ENCODE measurements at regions of chr1 and their contacts with region 1.

Region 1: DNA sequence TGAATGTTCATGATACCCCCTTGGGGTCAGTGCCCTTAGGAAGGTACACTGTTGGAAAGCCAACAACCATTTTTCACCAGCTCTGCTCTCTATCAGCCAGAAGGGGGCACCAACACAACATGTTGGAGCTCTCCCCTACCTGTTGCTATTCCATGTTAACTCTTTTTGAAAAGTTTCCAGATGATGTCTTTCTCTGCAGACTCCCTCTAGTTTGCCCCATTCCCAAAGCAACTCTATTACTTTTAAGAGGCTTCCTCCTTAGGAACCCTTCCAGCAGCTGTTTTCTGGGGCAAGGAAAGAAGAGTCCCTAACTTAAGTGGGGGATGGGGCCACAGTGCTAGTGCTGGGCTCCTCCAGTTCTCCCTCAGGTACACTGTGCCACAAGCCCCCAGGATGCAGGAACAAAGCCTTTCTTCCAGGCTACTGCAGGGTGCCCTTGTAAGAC is 22.9 kb upstream of the NDC1 start:
- DNase-seq: peak; percentile 75
- H3K4me3 ChIP-seq: no peak overlapping the region
- H3K27ac ChIP-seq: no peak overlapping the region
- H3K4me1 ChIP-seq: peaks cover 14% of the 10 kb centered on the region
- CTCF ChIP-seq: peak; percentile 95

Region 2: GRCh38 chr1:53792806-53793205 is 68.2 kb before region 1 on chr1:
- CTCF ChIA-PET with region 1: no interaction called
- POLR2A ChIA-PET with region 1: no interaction called
- intact Hi-C with region 1: no loop called
- DNase-seq: no peak
- H3K4me3 ChIP-seq: no peak overlapping the region
- H3K27ac ChIP-seq: no peak overlapping the region
- H3K4me1 ChIP-seq: no peaks in the 10 kb centered on the region
- CTCF ChIP-seq: no peak

Region 3: DNA sequence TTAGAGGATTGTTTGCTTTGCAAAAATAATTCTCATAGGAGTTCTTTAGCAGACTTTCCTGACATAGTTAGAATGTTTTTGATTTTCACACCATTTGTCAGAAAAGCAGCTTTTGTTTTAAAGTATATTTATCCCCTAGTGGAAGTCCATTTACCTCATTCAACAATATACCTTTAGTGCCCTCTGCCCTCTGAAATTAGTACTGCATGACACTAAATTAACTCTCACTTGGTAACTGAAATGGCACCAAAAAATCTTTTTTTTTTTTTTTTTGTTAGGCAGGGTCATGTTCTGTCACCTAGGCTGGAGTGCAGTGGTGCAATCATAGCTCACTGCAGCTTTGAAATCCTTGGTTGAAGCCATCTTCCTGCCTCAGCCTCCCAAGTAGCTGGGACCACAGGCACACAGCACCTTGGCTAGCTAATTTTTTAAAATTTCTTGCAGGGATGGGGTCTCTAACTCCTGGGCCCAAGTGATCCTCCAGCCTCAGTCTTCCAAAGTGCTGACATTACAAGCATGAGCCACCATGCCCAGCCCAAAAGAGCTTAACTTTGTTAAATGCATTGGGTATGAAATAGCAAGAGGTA is 98.8 kb after region 1 on chr1:
- CTCF ChIA-PET with region 1: interaction called, 15 read pairs
- POLR2A ChIA-PET with region 1: interaction called, 5 read pairs
- intact Hi-C with region 1: loop called (anchors 1 kb)
- DNase-seq: peak; percentile 55
- H3K4me3 ChIP-seq: no peak overlapping the region
- H3K27ac ChIP-seq: no peak overlapping the region
- H3K4me1 ChIP-seq: no peaks in the 10 kb centered on the region
- CTCF ChIP-seq: peak; percentile 90

Region 4: DNA sequence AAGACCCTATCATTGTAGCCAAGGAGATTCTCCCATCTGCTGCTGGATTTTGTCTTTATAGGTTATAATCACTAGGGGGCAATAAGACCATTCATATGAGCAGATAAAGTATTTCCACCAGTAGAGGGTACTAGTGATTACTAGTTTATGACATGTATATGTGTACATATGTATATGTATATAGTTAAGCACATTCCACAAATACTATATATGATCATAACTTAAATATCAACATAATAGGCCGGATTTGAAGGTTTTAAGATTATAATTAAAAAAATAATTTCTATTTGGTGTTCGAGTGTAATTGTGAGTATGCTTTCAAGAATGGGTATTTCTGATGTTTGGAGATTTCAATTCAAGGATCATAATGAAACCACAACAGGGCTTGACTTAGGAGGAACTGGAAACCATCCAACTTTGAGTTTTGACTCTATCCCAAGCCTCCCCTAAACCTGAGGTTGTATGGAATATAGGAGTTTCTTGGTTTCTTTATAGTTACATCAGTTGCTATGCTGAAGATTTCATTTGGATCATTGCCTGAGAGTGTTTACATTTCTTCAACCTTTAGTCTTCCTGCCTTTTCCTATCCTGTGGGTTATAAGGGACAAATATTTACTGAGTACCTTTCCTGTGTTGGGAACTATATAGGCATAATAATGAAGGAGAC is 209.3 kb after region 1 on chr1:
- CTCF ChIA-PET with region 1: no interaction called
- POLR2A ChIA-PET with region 1: no interaction called
- intact Hi-C with region 1: loop called (anchors 10 kb)
- DNase-seq: peak; percentile 69
- H3K4me3 ChIP-seq: no peak overlapping the region
- H3K27ac ChIP-seq: no peak overlapping the region
- H3K4me1 ChIP-seq: no peaks in the 10 kb centered on the region
- CTCF ChIP-seq: peak; percentile 100

Measured in OCI-LY7 (cell line).